CD8-positive, alpha-beta memory T cell (primary cell): ENCODE measurements at regions of chr6 and their contacts with region 1.

Region 1: GRCh38 chr6:36340618-36341454 is 4.1 kb upstream of the BNIP5 start:
- DNase-seq: peak; percentile 54 to 76 (median 62)
- H3K4me3 ChIP-seq: peak overlapping the region; percentile 5
- H3K4me3 Mint-ChIP-seq: peak overlapping the region in 4 of 7 donors; percentile 44 to 78 (median 65)
- H3K27ac ChIP-seq: no peak overlapping the region
- H3K27ac Mint-ChIP-seq: peak overlapping the region in 3 of 8 donors; percentile 65 to 81 (median 77)
- H3K4me1 ChIP-seq: peaks cover 12% of the 10 kb centered on the region
- H3K4me1 Mint-ChIP-seq: peaks cover 8 to 20% (median 20%) of the 10 kb centered on the region in 3 donors
- H3K27me3 ChIP-seq: peaks cover 5% of the 10 kb centered on the region
- H3K27me3 Mint-ChIP-seq: peaks cover 14 to 29% of the 10 kb centered on the region in 2 donors

Region 2: DNA sequence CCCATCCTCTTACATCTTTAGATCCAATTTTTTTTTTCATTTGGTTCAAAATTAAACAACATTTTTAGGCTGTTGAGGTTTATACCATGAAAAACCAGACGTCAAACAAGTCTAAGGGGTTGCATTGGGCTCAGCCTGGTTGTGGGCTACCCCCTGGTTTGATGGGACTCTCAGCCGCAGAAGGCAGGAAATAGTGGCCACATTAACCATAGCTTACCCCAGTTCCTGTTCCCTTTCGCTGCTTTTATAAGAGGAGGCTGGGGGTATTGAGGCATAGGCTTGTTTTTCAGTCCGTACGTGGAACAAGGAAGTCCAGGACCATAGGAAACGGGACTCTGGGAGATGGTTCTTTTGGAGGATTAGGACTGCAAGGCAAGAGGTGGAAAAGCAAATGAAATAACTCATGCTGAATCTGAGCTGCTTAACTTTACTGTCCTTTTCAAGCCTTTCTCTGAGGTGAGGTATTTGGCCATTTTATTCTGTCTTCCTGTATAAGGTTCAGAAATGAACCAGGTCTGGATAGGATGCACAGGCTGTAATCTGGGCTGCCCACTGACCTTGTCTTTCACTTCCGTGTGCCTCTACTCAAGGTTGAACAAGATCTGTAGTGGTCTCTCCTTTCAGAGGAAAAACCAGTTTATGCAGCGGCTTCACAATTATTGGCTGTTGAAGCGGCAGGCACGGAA is 136.6 kb before region 1 on chr6:
- CTCF ChIA-PET with region 1: no interaction called
- POLR2A ChIA-PET with region 1: no interaction called
- DNase-seq: peak; percentile 38 to 86 (median 78)
- H3K4me3 ChIP-seq: peak overlapping the region; percentile 41
- H3K4me3 Mint-ChIP-seq: peak overlapping the region; percentile 50 to 89 (median 80)
- H3K27ac ChIP-seq: no peak overlapping the region
- H3K27ac Mint-ChIP-seq: peak overlapping the region in 7 of 8 donors; percentile 40 to 89 (median 86)
- H3K4me1 ChIP-seq: peaks cover 49% of the 10 kb centered on the region
- H3K4me1 Mint-ChIP-seq: peaks cover 69 to 79% (median 72%) of the 10 kb centered on the region in 3 donors
- H3K27me3 ChIP-seq: no peaks in the 10 kb centered on the region
- H3K27me3 Mint-ChIP-seq: no peaks in the 10 kb centered on the region

Region 3: GRCh38 chr6:36350681-36351571 is 10.1 kb after region 1 on chr6:
- CTCF ChIA-PET with region 1: interaction called, 26 read pairs
- POLR2A ChIA-PET with region 1: no interaction called
- DNase-seq: no peak
- H3K4me3 ChIP-seq: no peak overlapping the region
- H3K4me3 Mint-ChIP-seq: no peak overlapping the region
- H3K27ac ChIP-seq: no peak overlapping the region
- H3K27ac Mint-ChIP-seq: no peak overlapping the region
- H3K4me1 ChIP-seq: no peaks in the 10 kb centered on the region
- H3K4me1 Mint-ChIP-seq: no peaks in the 10 kb centered on the region
- H3K27me3 ChIP-seq: no peaks in the 10 kb centered on the region
- H3K27me3 Mint-ChIP-seq: peaks cover 0 to 5% of the 10 kb centered on the region in 2 donors

Region 4: DNA sequence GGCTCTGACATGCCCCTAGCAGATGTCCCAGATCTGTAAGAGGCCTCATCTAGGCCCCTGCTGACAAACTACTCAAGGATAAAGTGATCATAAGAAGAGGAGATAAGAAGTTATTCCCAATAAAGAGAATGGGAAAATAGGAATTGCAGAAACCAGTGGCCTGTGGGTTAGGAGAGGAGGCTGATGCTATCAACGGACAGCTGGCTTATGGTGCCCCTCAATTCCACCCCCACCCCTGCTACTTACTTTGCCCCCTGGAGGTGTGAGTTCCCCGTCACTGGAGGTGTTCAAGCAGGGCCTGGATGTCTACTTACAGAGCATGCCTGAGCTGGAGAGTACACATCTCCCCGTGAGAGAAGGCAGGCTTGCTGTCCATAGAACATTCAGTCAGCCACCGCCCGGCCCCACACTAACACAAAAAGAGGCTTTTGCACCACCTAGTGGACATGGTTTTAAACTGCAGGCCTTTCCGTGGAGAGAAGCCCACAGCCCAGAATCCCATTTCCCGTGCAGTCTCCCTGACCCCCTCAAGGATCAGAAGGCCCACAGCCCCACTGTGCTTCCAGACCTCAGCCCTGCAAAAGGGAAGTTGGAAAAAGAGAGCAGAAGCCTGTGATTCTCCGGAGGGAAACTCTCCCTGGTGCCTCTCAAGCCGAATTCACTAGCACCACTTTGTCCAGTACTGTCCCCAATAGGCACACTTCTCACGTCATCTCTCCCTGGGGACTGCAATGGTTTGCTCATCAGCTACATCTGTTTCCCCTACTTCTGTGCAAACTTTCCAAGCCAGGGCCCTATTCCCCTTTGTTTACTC is 19.6 kb after region 1 on chr6:
- CTCF ChIA-PET with region 1: interaction called, 18 read pairs
- POLR2A ChIA-PET with region 1: no interaction called
- DNase-seq: peak; percentile 48 to 79 (median 58)
- H3K4me3 ChIP-seq: no peak overlapping the region
- H3K4me3 Mint-ChIP-seq: no peak overlapping the region
- H3K27ac ChIP-seq: no peak overlapping the region
- H3K27ac Mint-ChIP-seq: peak overlapping the region in 1 of 8 donors; percentile 42
- H3K4me1 ChIP-seq: peaks cover 3% of the 10 kb centered on the region
- H3K4me1 Mint-ChIP-seq: peaks cover 15 to 29% (median 16%) of the 10 kb centered on the region in 3 donors
- H3K27me3 ChIP-seq: no peaks in the 10 kb centered on the region
- H3K27me3 Mint-ChIP-seq: peaks cover 2 to 3% of the 10 kb centered on the region in 2 donors

Region 5: DNA sequence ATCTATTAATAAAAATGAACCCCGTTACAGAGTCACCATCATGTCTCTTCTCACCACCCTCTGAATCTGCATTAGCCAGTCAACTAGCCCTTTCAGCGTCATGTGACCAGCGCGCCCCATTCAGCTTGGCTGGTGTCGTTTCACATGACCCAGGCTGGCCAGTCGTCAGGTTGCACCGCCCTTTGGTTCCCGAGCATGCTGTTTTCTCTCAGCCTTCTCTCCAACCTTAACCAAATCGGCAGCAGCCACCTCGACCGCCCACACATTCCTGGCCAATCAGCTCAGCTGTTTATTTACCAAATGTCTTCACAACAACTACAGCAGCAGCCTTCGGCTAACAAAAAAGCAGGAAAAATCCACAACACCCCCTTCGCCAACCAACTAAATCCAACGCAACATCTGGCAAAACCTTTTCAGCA is 259.0 kb after region 1 on chr6:
- CTCF ChIA-PET with region 1: no interaction called
- POLR2A ChIA-PET with region 1: no interaction called
- DNase-seq: peak; percentile 58 to 77 (median 64)
- H3K4me3 ChIP-seq: peak overlapping the region; percentile 52
- H3K4me3 Mint-ChIP-seq: peak overlapping the region; percentile 89 to 99 (median 96)
- H3K27ac ChIP-seq: no peak overlapping the region
- H3K27ac Mint-ChIP-seq: peak overlapping the region; percentile 80 to 99 (median 92)
- H3K4me1 ChIP-seq: peaks cover 76% of the 10 kb centered on the region
- H3K4me1 Mint-ChIP-seq: peaks cover 71 to 87% (median 81%) of the 10 kb centered on the region in 3 donors
- H3K27me3 ChIP-seq: no peaks in the 10 kb centered on the region
- H3K27me3 Mint-ChIP-seq: peaks cover 0 to 3% of the 10 kb centered on the region in 2 donors